Colonic mucosa (tissue), 4 donors: ENCODE measurements at regions of chr1 and their contacts with region 1.

Region 1: GRCh38 chr1:107590900-107591633 is 373.9 kb downstream of the VAV3 start:
- DNase-seq: no peak
- H3K4me3 ChIP-seq: no peak overlapping the region
- H3K27ac ChIP-seq: no peak overlapping the region
- H3K4me1 ChIP-seq: no peaks in the 10 kb centered on the region
- H3K27me3 ChIP-seq: no peaks in the 10 kb centered on the region
- CTCF ChIP-seq: no peak

Region 2: DNA sequence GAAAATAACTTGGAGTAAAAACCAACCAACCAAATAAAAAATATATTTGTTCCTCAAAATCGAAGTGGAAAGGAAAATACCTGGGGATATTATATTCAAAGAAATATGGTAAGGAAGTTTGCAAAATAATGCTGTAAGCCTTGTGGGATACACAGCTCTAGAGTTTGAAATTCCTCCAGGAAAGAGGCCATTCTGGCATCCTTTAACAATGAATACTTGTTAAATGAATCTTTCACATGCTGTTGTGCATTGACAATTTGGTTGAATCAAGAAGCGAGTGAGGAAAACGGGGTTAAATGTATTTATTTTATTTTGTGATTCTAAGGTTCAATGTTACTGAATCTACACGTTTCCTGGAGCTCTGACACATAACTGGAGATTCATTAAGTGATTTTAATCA is 480.7 kb before region 1 on chr1:
- intact Hi-C with region 1: no loop called
- DNase-seq: no peak
- H3K4me3 ChIP-seq: no peak overlapping the region
- H3K27ac ChIP-seq: no peak overlapping the region
- H3K4me1 ChIP-seq: no peaks in the 10 kb centered on the region
- H3K27me3 ChIP-seq: no peaks in the 10 kb centered on the region
- CTCF ChIP-seq: no peak

Region 3: GRCh38 chr1:107434361-107434693 is 156.7 kb before region 1 on chr1:
- intact Hi-C with region 1: no loop called
- DNase-seq: no peak
- H3K4me3 ChIP-seq: no peak overlapping the region
- H3K27ac ChIP-seq: no peak overlapping the region
- H3K4me1 ChIP-seq: no peaks in the 10 kb centered on the region
- H3K27me3 ChIP-seq: no peaks in the 10 kb centered on the region
- CTCF ChIP-seq: no peak

Region 4: DNA sequence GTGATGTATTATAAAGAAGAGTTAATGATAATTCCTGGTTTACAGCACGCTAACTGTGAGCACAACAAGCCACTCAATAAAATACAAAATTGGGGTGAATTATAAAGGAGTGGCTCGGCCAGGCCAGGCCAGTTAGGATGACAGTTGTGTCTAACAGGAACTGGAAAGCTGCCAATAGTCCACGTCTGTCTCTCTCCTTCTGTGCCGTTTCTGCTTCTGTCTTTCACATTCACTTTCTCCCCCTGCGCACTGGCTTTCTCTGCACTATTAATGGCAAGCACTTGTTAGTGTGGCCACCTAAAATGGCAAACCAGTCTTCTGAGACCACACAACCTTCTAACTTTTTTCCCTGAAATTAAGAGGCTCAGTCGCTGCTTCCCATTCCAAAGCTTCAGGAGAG is 56.0 kb before region 1 on chr1:
- intact Hi-C with region 1: loop called (anchors 5 kb)
- DNase-seq: peak; percentile 38
- H3K4me3 ChIP-seq: no peak overlapping the region
- H3K27ac ChIP-seq: peak overlapping the region; percentile 43
- H3K4me1 ChIP-seq: peaks cover 4% of the 10 kb centered on the region
- H3K27me3 ChIP-seq: no peaks in the 10 kb centered on the region
- CTCF ChIP-seq: no peak